ENCODE measurements at regions of chr1 and their contacts with region 1.

Region 1: GRCh38 chr1:219066631-219067349 is 106.9 kb upstream of the LYPLAL1 start:
- H3K4me3 Mint-ChIP-seq: no peak overlapping the region
- H3K27ac Mint-ChIP-seq: no peak overlapping the region
- H3K4me1 Mint-ChIP-seq: peaks cover 6% of the 10 kb centered on the region
- H3K27me3 Mint-ChIP-seq: peaks cover 6% of the 10 kb centered on the region

Region 2: GRCh38 chr1:219120624-219121544 is 54.1 kb after region 1 on chr1:
- intact Hi-C with region 1: loop called (anchors 10 kb)
- H3K4me3 Mint-ChIP-seq: no peak overlapping the region
- H3K27ac Mint-ChIP-seq: no peak overlapping the region
- H3K4me1 Mint-ChIP-seq: peaks cover 21% of the 10 kb centered on the region
- H3K27me3 Mint-ChIP-seq: no peaks in the 10 kb centered on the region

Measured in dendritic cell treated with granulocyte-macrophage colony-stimulating factor and Interleukin-4, amounts not matched to agents 40 ng/mL and 50 ng/mL, for 4 days (primary cell).